Heart right ventricle (tissue), 16 donors: ENCODE measurements at regions of chr3 and their contacts with region 1.

Region 1: DNA sequence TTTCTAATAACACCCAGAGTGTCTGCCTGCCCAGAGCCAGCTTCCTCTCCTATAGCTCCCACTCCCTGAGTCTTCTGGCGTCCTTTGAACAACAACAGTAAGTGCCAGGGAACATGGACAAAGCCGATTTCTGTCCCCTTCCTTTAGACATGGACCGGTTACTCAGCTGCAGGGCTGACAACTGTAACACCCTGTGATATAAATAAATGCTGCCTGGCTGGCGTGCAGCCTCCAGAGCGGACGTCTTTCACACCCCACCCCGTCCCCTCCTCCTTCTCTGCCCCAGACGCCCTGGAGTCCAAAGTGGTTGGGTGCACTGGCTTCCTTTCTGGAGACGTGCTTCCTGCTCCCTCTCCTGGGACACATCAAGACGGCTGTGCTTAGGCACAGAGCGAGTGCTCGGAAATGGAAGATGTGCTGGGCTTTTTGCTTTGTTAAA is 281.9 kb upstream of the LRRFIP2 start:
- DNase-seq: peak; percentile 84 to 92
- ATAC-seq: peak; percentile 69 to 88 (median 84)
- H3K4me3 ChIP-seq: peak overlapping the region in 8 of 10 donors; percentile 0 to 90 (median 52)
- H3K27ac ChIP-seq: peak overlapping the region; percentile 77 to 98 (median 94)
- H3K4me1 ChIP-seq: peaks cover 35 to 88% (median 77%) of the 10 kb centered on the region in 9 donors
- H3K27me3 ChIP-seq: peaks cover 0 to 21% (median 0%) of the 10 kb centered on the region in 7 donors
- CTCF ChIP-seq: peak in 1 of 9 donors; percentile 18

Region 2: GRCh38 chr3:37330466-37330865 is 125.8 kb before region 1 on chr3:
- intact Hi-C with region 1: no loop called
- DNase-seq: no peak
- ATAC-seq: peak in 2 of 8 donors; percentile 42 to 46
- H3K4me3 ChIP-seq: peak overlapping the region in 1 of 10 donors; percentile 36
- H3K27ac ChIP-seq: peak overlapping the region in 2 of 10 donors; percentile 41 to 60
- H3K4me1 ChIP-seq: peaks cover 0 to 15% (median 0%) of the 10 kb centered on the region in 9 donors
- H3K27me3 ChIP-seq: no peaks in the 10 kb centered on the region
- CTCF ChIP-seq: no peak

Region 3: GRCh38 chr3:37492977-37493471 is 36.7 kb after region 1 on chr3:
- intact Hi-C with region 1: loop called in 5 of 10 experiments (anchors 1 to 5 kb)
- DNase-seq: peak in 1 of 2 donors; percentile 43
- ATAC-seq: peak; percentile 70 to 85 (median 78)
- H3K4me3 ChIP-seq: no peak overlapping the region
- H3K27ac ChIP-seq: peak overlapping the region in 9 of 10 donors; percentile 33 to 83 (median 80)
- H3K4me1 ChIP-seq: peaks cover 15 to 72% (median 59%) of the 10 kb centered on the region in 9 donors
- H3K27me3 ChIP-seq: no peaks in the 10 kb centered on the region
- CTCF ChIP-seq: no peak

Region 4: DNA sequence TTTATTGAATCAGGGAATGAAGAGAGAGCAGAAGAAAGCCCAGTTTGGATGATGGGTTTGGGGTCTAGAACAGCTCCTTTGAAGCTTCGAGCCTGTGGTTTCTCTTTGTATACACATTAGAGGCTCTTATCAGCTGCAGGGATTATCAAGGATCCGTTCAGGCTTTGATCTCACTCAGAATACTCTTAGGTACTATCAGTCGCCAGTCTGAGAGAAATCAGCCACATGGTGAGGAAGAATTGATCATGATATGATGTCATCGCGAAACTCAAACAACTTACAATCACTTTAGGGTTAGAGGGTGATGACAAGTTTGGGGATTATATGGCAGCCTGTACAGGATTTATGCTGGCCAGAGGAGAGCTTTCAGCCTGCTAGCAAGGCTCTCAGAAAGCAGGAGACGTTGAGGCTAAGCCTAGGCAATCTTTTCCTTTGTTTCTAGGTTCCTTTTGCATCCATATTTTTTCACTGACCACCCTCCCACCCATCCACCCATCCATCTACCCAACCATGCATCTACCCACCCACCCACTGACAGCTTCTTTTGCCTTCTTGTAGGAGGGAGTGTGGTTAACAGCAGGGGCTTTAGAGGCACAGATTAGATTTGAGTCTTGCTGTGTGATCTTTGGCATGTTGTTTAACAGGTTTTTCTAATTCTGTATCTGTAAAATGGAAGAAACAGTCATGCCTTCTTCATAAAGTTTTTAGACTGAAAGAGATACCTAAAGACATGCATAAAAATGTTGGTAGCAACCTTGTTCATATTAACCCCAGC is 48.5 kb after region 1 on chr3:
- intact Hi-C with region 1: loop called in 2 of 10 experiments (anchors 5 kb)
- DNase-seq: no peak
- ATAC-seq: no peak
- H3K4me3 ChIP-seq: no peak overlapping the region
- H3K27ac ChIP-seq: peak overlapping the region in 2 of 10 donors; percentile 17 to 37
- H3K4me1 ChIP-seq: peaks cover 2 to 73% (median 21%) of the 10 kb centered on the region in 9 donors
- H3K27me3 ChIP-seq: no peaks in the 10 kb centered on the region
- CTCF ChIP-seq: no peak

Region 5: GRCh38 chr3:37526511-37526910 is 70.2 kb after region 1 on chr3:
- intact Hi-C with region 1: loop called in 1 of 10 experiments (anchors 5 kb)
- DNase-seq: peak; percentile 77 to 84
- ATAC-seq: peak; percentile 87 to 98 (median 96)
- H3K4me3 ChIP-seq: no peak overlapping the region
- H3K27ac ChIP-seq: peak overlapping the region; percentile 50 to 87 (median 72)
- H3K4me1 ChIP-seq: peaks cover 0 to 61% (median 29%) of the 10 kb centered on the region in 9 donors
- H3K27me3 ChIP-seq: no peaks in the 10 kb centered on the region
- CTCF ChIP-seq: no peak

Region 6: GRCh38 chr3:37770938-37771918 is 314.9 kb after region 1 on chr3:
- intact Hi-C with region 1: loop called in 2 of 10 experiments (anchors 2 to 5 kb)
- DNase-seq: peak; percentile 47 to 84
- ATAC-seq: peak; percentile 75 to 91 (median 82)
- H3K4me3 ChIP-seq: no peak overlapping the region
- H3K27ac ChIP-seq: peak overlapping the region; percentile 74 to 97 (median 92)
- H3K4me1 ChIP-seq: peaks cover 27 to 83% (median 69%) of the 10 kb centered on the region in 9 donors
- H3K27me3 ChIP-seq: no peaks in the 10 kb centered on the region
- CTCF ChIP-seq: no peak

Region 7: GRCh38 chr3:37872413-37873160 is 416.3 kb after region 1 on chr3:
- intact Hi-C with region 1: no loop called
- DNase-seq: no peak
- ATAC-seq: no peak
- H3K4me3 ChIP-seq: no peak overlapping the region
- H3K27ac ChIP-seq: no peak overlapping the region
- H3K4me1 ChIP-seq: no peaks in the 10 kb centered on the region
- H3K27me3 ChIP-seq: no peaks in the 10 kb centered on the region
- CTCF ChIP-seq: no peak